ENCODE measurements at regions of chr7 and their contacts with region 1.

Region 1: GRCh38 chr7:29988424-29989256 is 961 bp downstream of the SCRN1 start:
- DNase-seq: peak; percentile 83
- H3K4me3 ChIP-seq: peak overlapping the region; percentile 87
- H3K27ac ChIP-seq: peak overlapping the region; percentile 88 to 90
- H3K4me1 ChIP-seq: peaks cover 6 to 10% of the 10 kb centered on the region in 2 experiments; a peak in 2 of 4 replicates
- H3K27me3 ChIP-seq: no peaks in the 10 kb centered on the region
- CTCF ChIP-seq: no peak
- EP300 ChIP-seq: no peak
- RAD21 ChIP-seq: no peak

Region 2: GRCh38 chr7:29976673-29977415 is 11.8 kb before region 1 on chr7:
- CTCF ChIA-PET with region 1: interaction called, 10 read pairs
- POLR2A ChIA-PET with region 1: interaction called, 4 read pairs
- DNase-seq: no peak
- H3K4me3 ChIP-seq: no peak overlapping the region
- H3K27ac ChIP-seq: no peak overlapping the region
- H3K4me1 ChIP-seq: peaks cover 0 to 12% of the 10 kb centered on the region in 2 experiments; a peak in 2 of 4 replicates
- H3K27me3 ChIP-seq: no peaks in the 10 kb centered on the region
- CTCF ChIP-seq: no peak
- EP300 ChIP-seq: no peak
- RAD21 ChIP-seq: no peak

Region 3: DNA sequence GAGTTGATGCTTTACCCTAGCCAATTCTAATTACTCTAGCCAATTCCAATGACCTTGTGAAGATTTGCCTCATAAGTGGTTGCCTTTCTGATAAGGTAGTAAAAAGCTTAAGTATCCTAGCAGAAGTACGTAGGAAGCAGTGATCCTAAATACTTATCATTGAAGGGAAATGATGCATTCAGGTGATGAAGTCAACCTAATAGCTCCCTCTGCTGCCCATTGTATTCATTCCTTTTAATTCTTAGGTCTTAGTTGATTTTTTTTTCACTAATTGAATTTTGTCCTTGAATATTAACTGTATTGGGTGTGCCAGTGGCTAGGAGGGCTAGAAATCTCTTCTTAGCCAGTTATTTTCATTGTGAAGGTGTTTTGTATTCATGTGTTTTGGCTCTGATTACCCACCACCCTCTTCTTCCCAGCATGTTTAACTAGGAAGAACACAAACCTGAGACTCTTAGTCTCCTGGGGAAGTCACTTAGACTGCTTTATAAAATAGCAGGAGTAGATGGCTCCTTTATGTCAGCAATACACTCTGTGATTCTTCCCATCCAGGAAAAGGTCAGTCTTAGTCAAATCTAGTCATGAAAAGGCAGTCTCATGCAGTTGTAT is 85.9 kb after region 1 on chr7:
- CTCF ChIA-PET with region 1: no interaction called
- POLR2A ChIA-PET with region 1: no interaction called
- DNase-seq: peak; percentile 32
- H3K4me3 ChIP-seq: no peak overlapping the region
- H3K27ac ChIP-seq: no peak overlapping the region
- H3K4me1 ChIP-seq: no peaks in the 10 kb centered on the region
- H3K27me3 ChIP-seq: no peaks in the 10 kb centered on the region
- CTCF ChIP-seq: peak; percentile 75
- EP300 ChIP-seq: no peak
- RAD21 ChIP-seq: peak; percentile 64